Activated CD8-positive, alpha-beta T cell treated with anti-CD3 and anti-CD28 coated beads, Interleukin-2, amount 10 ng/mL, durations not matched to agents 7 days and 5 days (primary cell): ENCODE measurements at regions of chr3 and their contacts with region 1.

Region 1: GRCh38 chr3:9736831-9737230 is 5.3 kb downstream of the BRPF1 start:
- DNase-seq: no peak
- ATAC-seq: no peak
- H3K4me3 Mint-ChIP-seq: no peak overlapping the region
- H3K27ac Mint-ChIP-seq: peak overlapping the region; percentile 5
- H3K4me1 Mint-ChIP-seq: peaks cover 58% of the 10 kb centered on the region
- H3K27me3 Mint-ChIP-seq: no peaks in the 10 kb centered on the region

Region 2: DNA sequence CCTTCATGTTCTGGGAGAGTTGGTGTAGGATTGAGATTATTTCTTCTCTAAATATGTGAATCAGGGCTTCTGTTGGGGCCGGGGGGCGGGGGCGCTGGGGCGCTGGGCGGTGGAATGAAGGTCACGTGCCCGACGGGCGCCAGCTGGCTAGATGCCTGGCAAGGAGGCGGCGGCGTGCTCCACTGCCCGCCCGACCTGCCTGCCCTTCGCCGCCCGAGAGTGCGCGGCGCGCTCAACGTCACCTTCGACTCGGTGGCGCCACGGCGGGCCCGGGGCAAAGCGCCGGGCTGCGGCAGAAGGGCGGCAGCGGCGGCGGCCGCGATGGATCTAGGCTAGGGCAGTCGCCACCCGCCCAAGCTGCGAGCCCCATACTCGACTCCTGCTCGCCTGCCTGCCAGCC is 136.2 kb before region 1 on chr3:
- CTCF ChIA-PET with region 1: no interaction called
- POLR2A ChIA-PET with region 1: no interaction called
- DNase-seq: no peak
- ATAC-seq: peak; percentile 51
- H3K4me3 Mint-ChIP-seq: no peak overlapping the region
- H3K27ac Mint-ChIP-seq: no peak overlapping the region
- H3K4me1 Mint-ChIP-seq: peaks cover 1% of the 10 kb centered on the region
- H3K27me3 Mint-ChIP-seq: peaks cover 12% of the 10 kb centered on the region

Region 3: GRCh38 chr3:9623148-9623547 is 113.7 kb before region 1 on chr3:
- CTCF ChIA-PET with region 1: no interaction called
- POLR2A ChIA-PET with region 1: no interaction called
- DNase-seq: no peak
- ATAC-seq: no peak
- H3K4me3 Mint-ChIP-seq: no peak overlapping the region
- H3K27ac Mint-ChIP-seq: no peak overlapping the region
- H3K4me1 Mint-ChIP-seq: no peaks in the 10 kb centered on the region
- H3K27me3 Mint-ChIP-seq: peaks cover 6% of the 10 kb centered on the region

Region 4: DNA sequence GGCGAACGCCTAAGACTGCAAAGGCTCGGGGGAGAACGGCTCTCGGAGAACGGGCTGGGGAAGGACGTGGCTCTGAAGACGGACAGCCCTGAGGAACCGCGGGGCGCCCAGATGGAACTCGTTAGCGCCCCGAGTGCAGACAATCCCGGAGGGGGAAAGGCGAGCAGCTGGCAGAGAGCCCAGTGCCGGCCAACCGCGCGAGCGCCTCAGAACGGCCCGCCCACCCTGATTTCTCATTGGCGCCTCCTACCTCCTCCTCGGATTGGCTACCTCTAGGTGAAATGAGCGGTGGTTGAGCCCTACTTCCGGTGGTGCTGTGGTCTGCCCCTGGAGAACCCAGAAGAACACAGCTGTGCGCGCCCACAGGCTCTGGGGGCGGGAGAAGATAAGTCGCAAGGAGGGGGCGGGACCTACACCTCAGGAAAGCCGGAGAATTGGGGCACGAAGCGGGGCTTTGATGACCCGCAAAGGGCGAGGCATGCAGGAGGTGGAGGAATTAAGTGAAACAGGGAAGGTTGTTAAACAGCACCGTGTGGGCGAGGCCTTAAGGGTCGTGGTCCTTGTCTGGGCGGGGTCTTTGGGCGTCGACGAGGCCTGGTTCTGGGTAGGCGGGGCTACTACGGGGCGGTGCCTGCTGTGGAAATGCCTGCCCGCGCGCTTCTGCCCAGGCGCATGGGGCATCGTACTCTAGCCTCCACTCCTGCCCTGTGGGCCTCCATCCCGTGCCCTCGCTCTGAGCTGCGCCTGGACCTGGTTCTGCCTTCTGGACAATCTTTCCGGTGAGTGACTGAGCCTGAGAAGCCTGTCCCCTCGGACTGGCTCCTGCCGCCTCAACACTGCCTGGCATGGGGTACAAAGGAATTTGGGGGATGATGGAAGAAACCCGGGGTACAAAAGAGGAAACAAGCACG is 13.1 kb after region 1 on chr3 and contains the start of gene OGG1:
- CTCF ChIA-PET with region 1: interaction called, 8 read pairs
- POLR2A ChIA-PET with region 1: interaction called, 29 read pairs
- DNase-seq: peak; percentile 99
- ATAC-seq: peak; percentile 94
- H3K4me3 Mint-ChIP-seq: peak within 1 kb of the TSS; percentile 98
- H3K27ac Mint-ChIP-seq: peak within 1 kb of the TSS; percentile 95
- H3K4me1 Mint-ChIP-seq: peaks cover 74% of the 10 kb centered on the region
- H3K27me3 Mint-ChIP-seq: no peaks in the 10 kb centered on the region
- total RNA-seq, gene OGG1: 36.9 to 37.7 TPM